ENCODE measurements at regions of chr9 and their contacts with region 1.

Region 1: GRCh38 chr9:101931756-101932155 is 193.3 kb upstream of the GRIN3A start:
- DNase-seq: no peak
- H3K4me3 ChIP-seq: no peak overlapping the region
- CTCF ChIP-seq: no peak

Region 2: GRCh38 chr9:101860920-101861319 is 70.8 kb before region 1 on chr9:
- in situ Hi-C with region 1: loop called (anchors 5 kb)
- DNase-seq: no peak
- H3K4me3 ChIP-seq: no peak overlapping the region
- CTCF ChIP-seq: no peak